ENCODE measurements at regions of chr5 and their contacts with region 1.

Region 1: GRCh38 chr5:180209137-180209581 is at the start of gene RASGEF1C:
- DNase-seq: peak; percentile 68
- ATAC-seq: peak; percentile 97
- H3K4me3 Mint-ChIP-seq: peak within 1 kb of the TSS; percentile 0
- H3K27ac Mint-ChIP-seq: no peak within 1 kb of the TSS
- H3K4me1 Mint-ChIP-seq: peaks cover 4% of the 10 kb centered on the region
- H3K27me3 Mint-ChIP-seq: peaks cover 43% of the 10 kb centered on the region
- CTCF ChIP-seq: peak; percentile 17
- total RNA-seq, gene RASGEF1C: not detected

Region 2: GRCh38 chr5:180126726-180127681 is 82.2 kb before region 1 on chr5:
- CTCF ChIA-PET with region 1: interaction called, 19 read pairs
- POLR2A ChIA-PET with region 1: no interaction called
- intact Hi-C with region 1: loop called (anchors 10 kb)
- DNase-seq: peak; percentile 45
- ATAC-seq: peak; percentile 83
- H3K4me3 Mint-ChIP-seq: no peak overlapping the region
- H3K27ac Mint-ChIP-seq: no peak overlapping the region
- H3K4me1 Mint-ChIP-seq: no peaks in the 10 kb centered on the region
- H3K27me3 Mint-ChIP-seq: peaks cover 15% of the 10 kb centered on the region
- CTCF ChIP-seq: peak; percentile 99

Region 3: DNA sequence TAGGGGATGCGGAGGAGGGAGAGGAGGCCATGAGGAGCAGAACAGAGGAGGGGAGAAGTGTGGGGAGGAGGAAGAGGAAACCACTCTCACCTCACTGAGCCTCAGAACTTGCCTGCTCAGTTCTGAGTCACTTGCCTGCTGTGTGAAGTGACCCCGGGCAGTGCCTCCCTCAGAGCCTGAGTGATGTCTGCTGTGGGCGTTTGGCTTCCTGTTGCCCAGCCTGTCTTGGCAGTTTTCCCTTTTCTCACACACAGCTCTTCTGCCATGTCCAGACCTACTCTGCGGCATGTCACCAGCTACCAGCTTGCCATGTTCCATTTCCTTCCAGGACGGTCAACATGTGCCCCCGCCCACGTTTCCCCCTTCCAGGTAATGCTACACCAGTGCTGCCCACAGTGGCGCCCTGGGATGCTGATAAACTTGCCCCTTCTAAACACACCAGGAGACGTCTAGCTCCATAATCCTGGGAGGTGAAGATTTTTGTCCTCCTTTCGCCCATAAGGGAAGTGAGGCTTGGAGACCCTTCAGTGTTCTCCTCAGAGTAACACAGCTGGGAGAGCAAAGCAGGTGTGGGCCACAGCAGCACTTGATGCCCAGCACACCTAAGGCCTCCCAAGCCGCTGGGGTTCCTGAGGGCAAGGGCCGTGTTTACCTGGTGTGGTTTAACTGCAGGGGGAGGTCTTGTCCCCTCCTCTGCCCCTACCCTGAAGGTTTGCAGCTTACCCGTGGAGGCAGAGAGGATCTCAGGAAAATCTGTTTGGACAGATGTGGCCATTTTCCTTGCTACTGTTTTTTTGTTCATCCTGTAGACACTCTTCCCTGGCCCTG is 73.8 kb before region 1 on chr5:
- CTCF ChIA-PET with region 1: interaction called, 5 read pairs
- POLR2A ChIA-PET with region 1: no interaction called
- intact Hi-C with region 1: loop called (anchors 10 kb)
- DNase-seq: peak; percentile 81
- ATAC-seq: peak; percentile 99
- H3K4me3 Mint-ChIP-seq: no peak overlapping the region
- H3K27ac Mint-ChIP-seq: peak overlapping the region; percentile 76
- H3K4me1 Mint-ChIP-seq: peaks cover 11% of the 10 kb centered on the region
- H3K27me3 Mint-ChIP-seq: peaks cover 5% of the 10 kb centered on the region
- CTCF ChIP-seq: no peak

Region 4: DNA sequence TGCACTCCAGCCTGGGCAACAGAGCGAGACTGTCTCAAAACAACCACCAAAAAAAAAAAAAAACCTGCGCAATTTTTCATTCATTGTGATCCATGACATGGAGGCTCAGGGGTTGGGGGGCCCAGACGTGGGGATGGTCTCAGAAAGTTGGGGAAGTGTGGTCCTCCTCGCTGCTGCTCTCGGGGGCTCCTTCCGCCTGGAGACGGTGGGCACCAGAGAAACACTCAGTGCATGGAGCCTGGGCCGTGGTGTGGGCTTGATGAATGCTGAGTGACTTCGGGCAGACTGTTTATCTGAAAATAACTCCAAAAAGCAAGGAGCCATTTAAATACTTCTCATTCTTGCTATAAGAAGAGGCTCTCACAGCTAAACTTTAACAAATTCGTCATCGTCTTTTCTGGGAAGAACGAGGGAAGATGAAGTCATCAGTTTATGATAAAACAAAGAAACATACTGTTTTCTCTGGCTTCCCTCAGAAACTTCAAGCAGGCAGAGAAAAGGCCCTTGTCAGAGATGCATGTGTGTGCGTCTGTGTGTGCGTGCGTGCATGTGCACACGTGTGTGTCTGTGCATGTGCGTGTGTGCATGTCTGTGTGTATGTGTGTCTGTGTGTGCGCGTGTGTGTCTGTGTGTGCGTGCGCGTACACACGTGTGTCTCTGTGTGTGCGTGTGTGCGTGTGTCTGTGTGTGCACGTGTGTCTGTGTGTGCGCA is 35.1 kb before region 1 on chr5:
- CTCF ChIA-PET with region 1: no interaction called
- POLR2A ChIA-PET with region 1: no interaction called
- intact Hi-C with region 1: no loop called
- DNase-seq: no peak
- ATAC-seq: no peak
- H3K4me3 Mint-ChIP-seq: no peak overlapping the region
- H3K27ac Mint-ChIP-seq: no peak overlapping the region
- H3K4me1 Mint-ChIP-seq: no peaks in the 10 kb centered on the region
- H3K27me3 Mint-ChIP-seq: peaks cover 2% of the 10 kb centered on the region
- CTCF ChIP-seq: no peak

Measured in activated CD8-positive, alpha-beta T cell treated with anti-CD3 and anti-CD28 coated beads for 36 hours (primary cell).